ENCODE measurements at regions of chr6 and their contacts with region 1.

Region 1: GRCh38 chr6:27893059-27893835 is 18.9 kb downstream of the OR2B2 start:
- DNase-seq: peak; percentile 88
- CTCF ChIP-seq: no peak

Region 2: DNA sequence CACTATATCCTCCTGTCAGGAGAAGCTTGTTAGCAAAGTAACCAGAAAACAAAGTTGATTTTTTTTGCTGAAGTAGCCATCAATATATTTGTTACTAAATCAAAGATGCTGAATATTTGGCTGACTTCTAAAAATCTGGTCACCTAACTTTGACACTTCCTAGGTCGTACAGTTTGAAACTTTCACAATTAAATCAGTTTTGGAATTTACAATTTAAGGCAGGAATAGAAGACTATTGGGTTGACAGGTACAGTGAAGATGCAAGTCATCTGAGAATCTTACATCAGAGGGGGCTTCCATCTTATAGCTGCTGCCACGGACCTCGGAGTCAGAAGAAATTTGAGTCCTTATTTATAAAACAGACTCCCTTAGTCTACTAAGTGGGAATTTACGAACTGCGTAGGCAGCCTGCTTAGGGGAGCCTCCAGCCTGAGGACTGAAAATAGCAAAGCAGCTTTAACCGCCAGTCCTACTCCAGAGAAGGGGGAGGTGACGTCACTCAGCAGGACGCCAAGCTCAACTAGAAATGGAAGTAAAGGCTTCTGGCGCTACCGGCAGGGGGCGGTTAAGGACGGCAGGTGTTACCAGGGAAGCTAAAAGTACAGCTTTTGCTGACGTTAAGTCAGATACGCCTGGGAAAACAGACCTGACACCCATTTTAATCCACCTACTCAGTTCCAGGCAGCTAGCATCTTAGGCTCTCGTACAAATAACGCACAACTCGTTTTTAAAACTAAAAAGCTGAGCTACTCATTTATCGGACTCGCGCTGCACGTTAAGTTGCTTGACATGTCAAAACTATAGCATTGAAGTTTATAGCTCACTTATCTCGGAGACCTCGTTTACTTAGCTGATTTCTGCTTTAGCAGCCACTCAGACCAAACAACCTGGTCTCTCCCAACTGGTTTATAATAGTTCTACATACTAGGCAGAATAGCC is 1867.1 kb before region 1 on chr6:
- CTCF ChIA-PET with region 1: interaction called, 3 read pairs
- POLR2A ChIA-PET with region 1: interaction called, 13 read pairs
- DNase-seq: peak; percentile 62
- CTCF ChIP-seq: peak; percentile 78

Region 3: DNA sequence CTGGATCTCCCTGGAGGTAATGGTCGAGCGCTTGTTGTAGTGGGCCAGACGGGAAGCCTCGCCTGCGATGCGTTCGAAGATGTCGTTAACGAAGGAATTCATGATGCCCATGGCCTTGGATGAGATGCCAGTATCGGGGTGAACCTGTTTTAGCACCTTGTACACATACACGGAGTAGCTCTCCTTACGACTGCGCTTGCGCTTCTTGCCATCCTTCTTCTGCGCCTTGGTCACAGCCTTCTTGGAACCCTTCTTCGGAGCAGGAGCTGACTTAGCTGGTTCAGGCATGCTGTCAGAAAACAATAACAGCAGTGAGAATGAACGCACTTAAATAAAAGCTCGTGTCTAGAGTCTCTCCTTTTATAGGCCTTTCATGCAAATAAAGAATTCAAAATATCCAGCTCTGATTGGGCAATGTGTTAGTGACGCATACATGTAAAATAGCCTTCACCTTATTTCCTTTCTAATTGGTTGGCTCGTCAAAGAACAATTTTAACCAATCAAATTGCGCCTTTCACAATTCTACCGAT is 1676.8 kb before region 1 on chr6:
- CTCF ChIA-PET with region 1: no interaction called
- POLR2A ChIA-PET with region 1: interaction called, 15 read pairs
- DNase-seq: peak; percentile 85
- CTCF ChIP-seq: no peak

Region 4: DNA sequence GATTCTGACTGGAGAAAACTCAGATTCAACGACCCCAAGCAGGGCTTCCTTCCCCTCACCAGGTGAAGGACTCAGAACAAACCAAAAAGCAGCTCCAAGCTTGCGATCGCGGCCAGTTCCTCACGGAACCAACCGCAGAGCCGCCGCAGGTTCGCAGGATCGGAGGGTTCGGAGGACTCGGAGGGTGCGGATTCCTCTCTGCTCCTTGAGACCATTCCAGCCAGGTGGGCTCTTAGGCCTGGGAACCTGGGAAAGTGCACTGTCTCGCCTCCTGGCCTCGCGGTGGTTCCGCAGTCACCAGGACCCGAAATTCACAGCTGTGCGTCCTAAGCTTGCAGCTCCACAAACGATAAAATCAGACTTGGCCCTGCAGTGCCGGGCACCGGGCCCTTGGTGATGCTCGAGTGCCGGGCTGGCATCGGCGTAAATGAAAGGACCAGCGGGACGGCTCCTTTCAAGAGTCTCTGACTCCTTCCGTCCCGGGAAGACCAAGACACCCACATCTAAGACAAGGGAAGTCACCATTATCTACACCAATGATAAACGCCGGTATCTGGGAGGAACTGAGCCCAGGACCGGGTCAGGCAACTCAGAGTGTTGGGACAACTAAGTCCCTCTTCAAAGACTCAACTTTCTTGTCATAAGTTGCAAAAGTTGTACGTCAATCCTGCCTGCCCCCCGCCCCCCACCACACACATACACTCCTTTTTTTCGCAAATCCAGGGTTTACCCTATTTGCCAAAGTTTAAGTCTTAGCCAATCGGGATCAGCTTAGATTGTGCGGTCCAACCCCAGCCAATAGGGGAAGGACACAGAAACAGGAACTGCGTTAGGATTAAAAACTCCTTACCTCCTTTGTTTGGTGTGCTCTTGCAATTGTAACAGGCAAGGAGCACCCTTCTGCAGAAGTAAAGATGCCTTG is 715.5 kb before region 1 on chr6:
- CTCF ChIA-PET with region 1: interaction called, 3 read pairs
- POLR2A ChIA-PET with region 1: interaction called, 10 read pairs
- DNase-seq: peak; percentile 77
- CTCF ChIP-seq: peak; percentile 47

Region 5: GRCh38 chr6:27761391-27761790 is 131.9 kb before region 1 on chr6:
- CTCF ChIA-PET with region 1: interaction called, 22 read pairs
- POLR2A ChIA-PET with region 1: interaction called, 6 read pairs
- DNase-seq: peak; percentile 57
- CTCF ChIP-seq: no peak

Region 6: GRCh38 chr6:27825025-27825793 is 68.0 kb before region 1 on chr6:
- CTCF ChIA-PET with region 1: interaction called, 80 read pairs
- POLR2A ChIA-PET with region 1: interaction called, 38 read pairs
- DNase-seq: no peak
- CTCF ChIP-seq: no peak

Region 7: DNA sequence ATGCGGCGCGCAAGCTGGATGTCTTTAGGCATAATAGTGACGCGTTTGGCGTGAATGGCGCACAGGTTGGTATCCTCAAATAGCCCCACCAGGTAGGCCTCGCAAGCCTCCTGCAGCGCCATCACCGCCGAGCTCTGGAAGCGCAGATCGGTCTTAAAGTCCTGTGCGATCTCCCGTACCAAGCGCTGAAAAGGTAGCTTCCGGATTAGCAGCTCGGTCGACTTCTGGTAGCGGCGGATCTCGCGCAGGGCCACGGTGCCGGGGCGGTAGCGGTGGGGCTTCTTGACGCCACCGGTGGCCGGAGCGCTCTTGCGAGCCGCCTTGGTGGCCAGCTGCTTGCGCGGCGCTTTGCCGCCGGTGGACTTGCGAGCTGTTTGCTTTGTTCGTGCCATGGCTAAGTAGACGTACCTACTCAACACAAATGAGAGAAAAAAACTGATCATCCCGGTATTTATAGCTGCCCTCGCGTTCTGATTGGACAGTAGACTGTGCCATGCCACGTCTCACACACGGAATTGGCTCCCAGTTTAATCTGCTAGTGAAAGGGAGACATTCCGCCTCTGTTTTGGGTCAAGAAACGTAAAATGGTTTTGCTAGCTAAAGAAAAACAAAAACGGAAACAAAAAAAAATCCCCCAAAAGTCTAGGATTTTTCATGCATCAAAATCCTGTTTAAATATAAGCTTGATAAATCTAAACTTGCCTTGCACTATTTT is 21.2 kb before region 1 on chr6:
- CTCF ChIA-PET with region 1: interaction called, 85 read pairs
- POLR2A ChIA-PET with region 1: interaction called, 240 read pairs
- DNase-seq: peak; percentile 86
- CTCF ChIP-seq: peak; percentile 56

Region 8: GRCh38 chr6:28115799-28116198 is 222.6 kb after region 1 on chr6:
- CTCF ChIA-PET with region 1: no interaction called
- POLR2A ChIA-PET with region 1: no interaction called
- DNase-seq: no peak
- CTCF ChIP-seq: no peak

Region 9: DNA sequence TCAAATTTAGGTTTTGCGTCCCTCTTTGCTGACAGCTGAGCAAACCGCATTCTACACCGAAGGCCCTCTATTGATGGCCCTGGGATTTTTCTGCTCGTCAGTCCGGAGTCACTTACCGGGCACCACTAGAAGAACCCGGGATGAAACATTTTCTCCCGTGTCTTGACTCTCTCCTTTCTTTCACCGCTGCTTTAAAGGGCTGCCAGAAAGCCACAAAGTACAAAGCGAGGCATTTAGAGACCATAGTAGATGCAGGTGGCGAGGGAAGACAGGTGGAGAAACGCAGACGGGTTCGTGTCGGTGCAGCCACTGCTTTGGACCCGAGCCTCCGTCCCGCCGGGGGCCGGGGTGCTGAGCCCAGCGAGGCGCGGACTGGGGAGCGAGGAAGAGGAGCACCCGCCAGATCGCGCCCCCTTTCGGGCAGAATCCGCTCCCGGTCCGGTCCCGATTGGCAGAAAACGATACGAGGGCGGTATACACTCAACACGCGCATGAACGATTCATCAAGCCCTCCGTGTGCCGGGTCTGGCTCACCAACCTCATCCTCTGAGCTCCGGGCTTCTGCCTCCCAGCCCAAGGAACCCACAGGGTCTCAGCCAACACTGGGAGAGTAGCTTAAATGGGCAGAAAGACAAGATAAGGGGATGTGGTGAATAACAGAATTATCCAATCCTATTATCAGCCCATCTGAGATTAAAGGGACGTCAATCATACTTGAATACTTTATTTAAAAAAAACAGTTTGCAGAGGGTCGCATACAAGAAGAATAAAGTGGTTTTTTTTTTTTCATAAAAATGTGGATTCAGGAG is 945.6 kb after region 1 on chr6:
- CTCF ChIA-PET with region 1: no interaction called
- POLR2A ChIA-PET with region 1: no interaction called
- DNase-seq: peak; percentile 73
- CTCF ChIP-seq: peak; percentile 74